ENCODE measurements at regions of chr1 and their contacts with region 1.

Region 1: DNA sequence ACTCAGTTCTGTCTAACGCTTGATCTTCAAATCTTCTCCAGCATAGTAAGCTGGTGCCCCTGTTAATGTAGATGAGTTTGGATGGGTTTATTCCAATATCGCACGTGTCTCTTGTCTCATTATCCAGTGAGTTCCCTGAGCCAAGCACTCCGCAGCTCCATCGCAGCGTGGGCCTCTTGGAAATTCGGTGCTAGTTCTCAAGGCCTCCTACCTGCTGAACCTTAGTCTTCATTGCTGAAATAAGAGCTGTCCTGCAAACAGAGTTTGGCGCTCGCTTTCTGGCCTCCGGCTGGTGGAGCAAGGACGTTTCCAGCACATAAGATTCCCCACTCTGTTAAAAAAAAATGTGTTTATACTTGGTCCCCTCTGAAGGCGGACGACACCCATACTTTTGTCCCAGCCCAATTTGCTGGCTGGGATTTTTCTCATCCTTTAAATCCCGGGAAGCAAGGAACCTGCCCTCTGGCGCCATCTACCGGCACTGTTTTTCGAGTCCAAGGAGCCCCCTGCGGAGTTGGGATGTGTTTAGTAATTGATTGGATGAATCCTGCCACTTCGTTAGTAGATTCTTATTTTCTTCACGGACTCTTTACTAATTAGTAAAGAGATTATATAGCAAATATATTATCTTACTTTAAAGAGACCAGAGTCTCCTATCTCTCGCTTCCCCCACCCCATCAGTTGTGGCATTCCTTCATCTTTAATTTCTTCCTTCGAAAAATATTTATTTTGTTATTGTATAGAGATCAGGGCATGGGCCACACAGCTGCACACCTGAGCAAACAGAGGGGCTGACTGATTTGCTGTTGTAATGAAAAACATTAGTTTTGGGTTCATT is 14.7 kb downstream of the JUN start:
- DNase-seq: peak; percentile 78
- H3K4me3 Mint-ChIP-seq: no peak overlapping the region
- H3K27ac Mint-ChIP-seq: no peak overlapping the region
- H3K4me1 Mint-ChIP-seq: peaks cover 29% of the 10 kb centered on the region
- H3K27me3 Mint-ChIP-seq: no peaks in the 10 kb centered on the region
- CTCF ChIP-seq: peak; percentile 67

Region 2: DNA sequence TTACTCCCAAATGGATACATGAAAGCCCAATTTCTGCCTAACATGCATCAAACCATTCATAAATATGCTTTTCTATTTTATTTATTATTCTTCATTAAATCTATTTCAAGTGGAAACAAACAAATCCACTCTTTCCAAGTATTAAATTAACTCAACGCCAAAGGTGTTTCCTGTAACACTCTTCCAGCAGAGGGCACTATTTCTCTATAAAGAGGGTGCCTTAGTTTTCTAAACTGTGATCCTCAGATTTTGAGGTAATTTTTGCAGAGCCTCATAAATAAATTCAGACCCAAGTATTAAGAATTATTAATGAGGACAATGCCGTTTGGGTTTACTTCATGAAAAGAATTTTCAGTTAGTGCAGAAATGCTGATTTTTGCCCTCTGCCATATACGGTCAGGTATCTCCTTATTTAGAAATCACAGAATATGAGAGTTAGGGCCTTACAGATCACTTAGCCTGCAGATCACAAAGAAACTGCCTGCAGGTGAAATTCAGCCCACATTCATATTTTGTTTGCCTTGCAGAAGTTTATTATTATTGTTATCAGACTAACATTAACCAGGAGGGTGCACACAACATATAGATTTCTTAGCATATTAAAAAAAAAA is 29.2 kb before region 1 on chr1:
- CTCF ChIA-PET with region 1: interaction called, 33 read pairs
- POLR2A ChIA-PET with region 1: interaction called, 3 read pairs
- intact Hi-C with region 1: loop called (anchors 1 kb)
- DNase-seq: peak; percentile 69
- H3K4me3 Mint-ChIP-seq: no peak overlapping the region
- H3K27ac Mint-ChIP-seq: no peak overlapping the region
- H3K4me1 Mint-ChIP-seq: peaks cover 6% of the 10 kb centered on the region
- H3K27me3 Mint-ChIP-seq: no peaks in the 10 kb centered on the region
- CTCF ChIP-seq: peak; percentile 54

Region 3: GRCh38 chr1:58745117-58745516 is 24.1 kb before region 1 on chr1:
- CTCF ChIA-PET with region 1: interaction called, 33 read pairs
- POLR2A ChIA-PET with region 1: interaction called, 3 read pairs
- intact Hi-C with region 1: loop called (anchors 1 kb)
- DNase-seq: no peak
- H3K4me3 Mint-ChIP-seq: no peak overlapping the region
- H3K27ac Mint-ChIP-seq: no peak overlapping the region
- H3K4me1 Mint-ChIP-seq: peaks cover 14% of the 10 kb centered on the region
- H3K27me3 Mint-ChIP-seq: no peaks in the 10 kb centered on the region
- CTCF ChIP-seq: no peak

Region 4: GRCh38 chr1:58755468-58755872 is 13.7 kb before region 1 on chr1:
- CTCF ChIA-PET with region 1: interaction called, 47 read pairs
- POLR2A ChIA-PET with region 1: interaction called, 6 read pairs
- intact Hi-C with region 1: no loop called
- DNase-seq: peak; percentile 98
- H3K4me3 Mint-ChIP-seq: peak overlapping the region; percentile 49
- H3K27ac Mint-ChIP-seq: peak overlapping the region; percentile 91
- H3K4me1 Mint-ChIP-seq: peaks cover 39% of the 10 kb centered on the region
- H3K27me3 Mint-ChIP-seq: no peaks in the 10 kb centered on the region
- CTCF ChIP-seq: no peak

Region 5: DNA sequence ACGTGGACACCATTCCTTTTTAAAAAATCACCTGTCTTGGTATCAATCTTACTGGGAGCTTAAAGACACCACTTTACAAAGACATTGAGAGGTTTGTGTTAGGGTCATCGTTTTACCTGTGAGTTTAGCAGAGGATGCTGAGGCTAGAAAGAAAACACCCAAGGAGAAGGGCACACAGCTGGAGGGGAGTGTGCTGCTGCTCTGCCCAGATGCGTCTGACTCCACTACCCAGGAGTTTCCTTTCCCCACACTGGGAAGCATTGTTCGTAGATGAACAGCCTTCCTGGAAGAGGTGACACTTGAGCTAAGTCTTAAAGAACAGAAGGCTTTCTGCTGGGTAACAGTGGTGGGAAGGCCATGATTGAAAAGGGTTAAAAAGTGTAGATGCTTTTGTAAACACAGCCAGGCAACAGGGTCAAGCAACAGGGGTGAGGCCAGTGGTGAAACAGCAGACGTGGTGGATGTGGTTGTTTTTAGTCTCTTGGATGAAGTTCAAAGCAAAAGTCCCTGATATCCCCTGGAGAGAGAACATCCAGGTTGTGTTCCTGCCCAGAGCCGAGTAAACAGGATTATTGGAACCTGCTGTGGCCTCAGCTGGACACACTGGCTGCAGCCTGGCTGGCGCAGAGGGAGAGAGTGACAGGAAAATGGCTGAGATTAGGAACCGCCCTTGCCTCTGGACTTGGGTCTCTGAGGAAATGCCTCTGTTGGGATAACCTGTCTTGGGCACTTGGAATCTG is 213.2 kb after region 1 on chr1:
- CTCF ChIA-PET with region 1: no interaction called
- POLR2A ChIA-PET with region 1: no interaction called
- intact Hi-C with region 1: no loop called
- DNase-seq: no peak
- H3K4me3 Mint-ChIP-seq: no peak overlapping the region
- H3K27ac Mint-ChIP-seq: no peak overlapping the region
- H3K4me1 Mint-ChIP-seq: peaks cover 7% of the 10 kb centered on the region
- H3K27me3 Mint-ChIP-seq: no peaks in the 10 kb centered on the region
- CTCF ChIP-seq: no peak